ENCODE measurements at regions of chr9 and their contacts with region 1.

Region 1: GRCh38 chr9:113410207-113410864 is at the starts of genes C9orf43 and POLE3:
- H3K4me3 Mint-ChIP-seq: peak within 1 kb of the TSS; percentile 100
- H3K27ac Mint-ChIP-seq: peak within 1 kb of the TSS; percentile 99
- H3K4me1 Mint-ChIP-seq: peaks cover 33% of the 10 kb centered on the region
- H3K27me3 Mint-ChIP-seq: no peaks in the 10 kb centered on the region

Region 2: DNA sequence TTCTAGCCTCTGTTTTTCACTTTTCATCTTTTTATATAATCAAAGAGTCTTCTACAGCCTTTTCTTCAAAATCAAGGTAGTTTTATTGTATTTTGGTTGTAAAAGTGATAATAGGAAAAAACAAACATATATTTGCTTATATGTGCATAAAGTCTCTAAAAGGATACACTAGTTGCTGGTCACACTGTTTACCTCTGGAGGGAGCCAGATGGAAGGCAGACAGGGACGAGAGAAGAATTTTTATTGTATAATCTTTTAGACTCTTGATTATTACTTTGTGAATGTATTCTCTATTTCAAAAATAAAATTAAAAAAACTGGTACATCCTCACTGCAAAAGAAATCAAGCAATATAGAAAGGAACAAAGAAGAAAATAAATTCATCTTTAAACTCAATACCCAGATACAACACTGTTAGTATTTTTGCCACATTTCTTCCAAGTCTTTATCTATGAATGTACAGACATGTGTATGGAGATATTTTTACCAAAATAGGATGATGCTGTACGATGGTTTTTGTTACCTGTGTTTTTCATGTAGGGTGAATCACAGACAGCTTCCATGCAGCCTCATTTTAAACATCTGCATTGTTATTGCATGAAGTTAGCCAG is 101.0 kb before region 1 on chr9:
- intact Hi-C with region 1: loop called (anchors 1 kb)
- H3K4me3 Mint-ChIP-seq: no peak overlapping the region
- H3K27ac Mint-ChIP-seq: no peak overlapping the region
- H3K4me1 Mint-ChIP-seq: peaks cover 6% of the 10 kb centered on the region
- H3K27me3 Mint-ChIP-seq: no peaks in the 10 kb centered on the region

Measured in dendritic cell treated with granulocyte-macrophage colony-stimulating factor and Interleukin-4, amounts not matched to agents 40 ng/mL and 50 ng/mL, for 4 days (primary cell).